Heart right ventricle (tissue), 16 donors: ENCODE measurements at regions of chr13 and their contacts with region 1.

Region 1: GRCh38 chr13:82739881-82740280 is 1142.4 kb downstream of the SLITRK1 start:
- DNase-seq: no peak
- ATAC-seq: no peak
- H3K4me3 ChIP-seq: no peak overlapping the region
- H3K27ac ChIP-seq: no peak overlapping the region
- H3K4me1 ChIP-seq: no peaks in the 10 kb centered on the region
- H3K27me3 ChIP-seq: no peaks in the 10 kb centered on the region
- CTCF ChIP-seq: no peak

Region 2: GRCh38 chr13:82681535-82681934 is 58.3 kb before region 1 on chr13:
- intact Hi-C with region 1: loop called in 1 of 10 experiments (anchors 5 kb)
- DNase-seq: no peak
- ATAC-seq: no peak
- H3K4me3 ChIP-seq: no peak overlapping the region
- H3K27ac ChIP-seq: no peak overlapping the region
- H3K4me1 ChIP-seq: no peaks in the 10 kb centered on the region
- H3K27me3 ChIP-seq: no peaks in the 10 kb centered on the region
- CTCF ChIP-seq: no peak